Colonic mucosa (tissue), 4 donors: ENCODE measurements at regions of chr11 and their contacts with region 1.

Region 1: DNA sequence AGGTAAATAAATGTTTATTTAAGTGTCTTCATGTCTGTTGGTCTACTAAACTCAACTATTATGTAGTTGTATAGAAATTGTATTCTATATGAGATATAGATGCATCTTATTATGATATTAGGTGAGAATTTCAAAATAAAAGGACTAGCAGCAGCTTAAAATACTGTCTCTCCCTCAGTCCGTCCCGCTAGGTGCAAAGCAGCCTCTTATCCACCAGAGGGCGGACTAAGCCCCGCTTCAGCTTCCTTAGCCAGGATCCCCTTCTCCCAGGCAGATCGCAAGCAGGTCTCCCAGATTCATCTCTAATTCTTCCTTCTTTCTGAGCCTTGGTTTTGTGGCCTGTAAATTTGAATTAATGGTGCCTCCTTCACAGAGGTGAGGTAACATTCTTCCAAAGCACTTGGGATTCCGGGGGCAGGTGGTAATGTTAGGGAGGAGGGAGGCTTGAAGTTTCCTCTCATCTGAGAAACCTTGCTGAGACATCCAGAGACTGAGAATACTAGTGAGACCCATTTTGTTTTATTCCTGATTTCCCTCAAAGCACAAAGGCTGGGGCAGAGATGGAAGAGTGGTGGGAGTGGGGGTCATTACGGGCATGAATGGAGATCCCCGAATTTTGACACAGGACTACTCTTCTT is 13.5 kb upstream of the INSC start:
- DNase-seq: peak; percentile 65
- H3K4me3 ChIP-seq: no peak overlapping the region
- H3K27ac ChIP-seq: no peak overlapping the region
- H3K4me1 ChIP-seq: no peaks in the 10 kb centered on the region
- H3K27me3 ChIP-seq: no peaks in the 10 kb centered on the region
- CTCF ChIP-seq: peak; percentile 90

Region 2: DNA sequence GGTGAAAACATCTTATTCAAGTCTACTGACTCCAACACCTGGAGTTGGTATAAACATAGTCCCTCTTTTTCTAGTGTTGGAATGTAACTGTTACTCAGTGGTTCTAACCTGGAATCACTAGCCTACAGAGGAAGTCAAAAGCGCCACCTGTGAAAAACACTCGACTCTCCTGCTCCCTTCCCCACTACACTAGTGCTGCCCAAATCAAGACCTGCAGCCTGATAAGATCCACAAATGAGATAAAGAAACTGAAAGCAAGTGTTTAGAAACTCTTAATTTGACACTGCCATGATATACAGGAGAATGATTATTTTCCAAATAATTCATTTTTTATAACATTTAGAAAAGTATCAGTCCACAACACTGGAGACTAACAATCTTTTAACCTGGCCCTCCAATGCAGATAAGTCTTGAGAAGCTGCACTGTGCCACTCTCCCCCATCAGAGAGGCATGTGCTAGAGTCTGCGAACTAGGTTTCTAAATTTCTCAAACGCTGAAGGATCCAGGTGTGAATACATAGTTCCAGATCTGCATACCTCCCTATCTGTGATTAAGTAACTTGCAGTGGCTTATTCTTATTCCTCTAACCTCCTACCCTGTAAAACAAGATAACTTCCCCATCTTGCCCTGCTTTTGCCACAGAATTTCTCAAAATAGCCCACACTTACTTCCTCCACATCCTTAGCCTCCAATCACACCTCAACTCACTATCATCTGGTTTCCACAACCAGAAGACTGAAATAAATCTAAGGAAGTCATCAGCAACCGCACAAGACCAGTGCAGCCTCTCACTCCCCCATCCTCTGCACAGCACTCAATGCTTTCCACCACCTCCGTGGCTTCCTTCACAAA is 830.3 kb before region 1 on chr11:
- intact Hi-C with region 1: no loop called
- DNase-seq: no peak
- H3K4me3 ChIP-seq: no peak overlapping the region
- H3K27ac ChIP-seq: no peak overlapping the region
- H3K4me1 ChIP-seq: peaks cover 4% of the 10 kb centered on the region
- H3K27me3 ChIP-seq: no peaks in the 10 kb centered on the region
- CTCF ChIP-seq: no peak

Region 3: DNA sequence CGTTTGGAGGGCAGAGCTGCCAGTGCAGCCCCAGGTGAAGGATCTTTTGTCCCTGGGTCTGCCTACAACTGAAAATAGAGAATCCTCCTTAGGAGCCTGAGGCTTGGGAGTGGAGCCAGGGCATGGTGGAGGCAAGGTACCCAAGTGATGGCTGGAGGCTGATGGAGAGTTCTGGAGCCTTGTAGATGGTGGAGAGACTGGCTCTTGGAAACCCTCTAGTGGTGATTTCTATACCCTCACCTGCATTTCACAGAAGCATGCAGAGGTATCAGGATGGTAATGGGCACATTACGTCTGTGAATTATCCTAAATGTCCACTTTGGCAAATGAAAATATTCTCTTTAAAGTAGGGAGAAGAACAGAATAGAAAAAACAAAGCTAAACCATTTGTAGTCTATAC is 57.9 kb after region 1 on chr11:
- intact Hi-C with region 1: loop called (anchors 5 kb)
- DNase-seq: peak; percentile 25
- H3K4me3 ChIP-seq: no peak overlapping the region
- H3K27ac ChIP-seq: no peak overlapping the region
- H3K4me1 ChIP-seq: no peaks in the 10 kb centered on the region
- H3K27me3 ChIP-seq: no peaks in the 10 kb centered on the region
- CTCF ChIP-seq: peak; percentile 36

Region 4: DNA sequence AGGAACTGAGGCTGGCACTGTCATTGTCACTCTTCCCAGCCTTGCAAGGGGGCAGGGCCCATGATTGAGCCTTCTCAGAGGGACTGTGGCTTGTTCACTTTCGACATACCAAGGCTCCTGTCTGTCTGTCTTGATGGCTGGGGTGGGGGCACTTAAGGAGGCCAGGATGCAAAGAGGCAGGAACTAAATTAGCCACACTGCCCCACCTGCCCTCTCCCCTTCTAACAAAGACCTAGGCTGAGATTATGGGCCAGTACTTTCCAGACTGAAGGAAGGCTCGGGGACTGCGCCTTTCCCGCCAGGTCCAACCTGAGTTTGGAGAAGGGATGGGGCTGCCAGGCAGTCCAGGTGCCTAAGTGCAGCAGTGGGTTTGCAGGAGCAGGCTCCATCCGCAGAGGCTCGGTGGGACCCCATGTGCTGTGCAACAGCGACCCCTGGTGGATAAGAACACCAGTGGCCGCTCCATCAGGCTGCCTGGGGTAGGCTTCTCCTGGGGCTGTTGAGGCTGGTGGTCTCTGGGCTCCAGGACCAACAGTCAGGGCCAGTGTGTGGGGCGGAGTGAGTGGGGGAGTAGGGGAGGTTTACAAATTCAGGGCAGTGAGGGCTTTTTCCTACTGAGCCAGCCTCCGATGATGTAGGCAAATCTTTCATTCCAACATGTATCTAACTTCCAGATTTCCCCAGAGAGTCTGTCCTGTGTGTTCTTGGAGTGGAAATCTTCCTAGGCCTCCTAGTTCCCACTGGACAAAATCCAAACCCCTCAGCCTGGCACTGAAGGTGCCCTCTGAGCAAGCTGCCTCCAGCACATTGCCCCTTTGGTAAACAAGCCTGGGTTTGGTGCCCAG is 107.4 kb after region 1 on chr11:
- intact Hi-C with region 1: loop called (anchors 1 kb)
- DNase-seq: peak; percentile 78
- H3K4me3 ChIP-seq: no peak overlapping the region
- H3K27ac ChIP-seq: no peak overlapping the region
- H3K4me1 ChIP-seq: no peaks in the 10 kb centered on the region
- H3K27me3 ChIP-seq: no peaks in the 10 kb centered on the region
- CTCF ChIP-seq: peak; percentile 90

Region 5: GRCh38 chr11:15347969-15348734 is 247.0 kb after region 1 on chr11:
- intact Hi-C with region 1: no loop called
- DNase-seq: no peak
- H3K4me3 ChIP-seq: no peak overlapping the region
- H3K27ac ChIP-seq: no peak overlapping the region
- H3K4me1 ChIP-seq: no peaks in the 10 kb centered on the region
- H3K27me3 ChIP-seq: no peaks in the 10 kb centered on the region
- CTCF ChIP-seq: no peak